ENCODE measurements at regions of chr3 and their contacts with region 1.

Region 1: DNA sequence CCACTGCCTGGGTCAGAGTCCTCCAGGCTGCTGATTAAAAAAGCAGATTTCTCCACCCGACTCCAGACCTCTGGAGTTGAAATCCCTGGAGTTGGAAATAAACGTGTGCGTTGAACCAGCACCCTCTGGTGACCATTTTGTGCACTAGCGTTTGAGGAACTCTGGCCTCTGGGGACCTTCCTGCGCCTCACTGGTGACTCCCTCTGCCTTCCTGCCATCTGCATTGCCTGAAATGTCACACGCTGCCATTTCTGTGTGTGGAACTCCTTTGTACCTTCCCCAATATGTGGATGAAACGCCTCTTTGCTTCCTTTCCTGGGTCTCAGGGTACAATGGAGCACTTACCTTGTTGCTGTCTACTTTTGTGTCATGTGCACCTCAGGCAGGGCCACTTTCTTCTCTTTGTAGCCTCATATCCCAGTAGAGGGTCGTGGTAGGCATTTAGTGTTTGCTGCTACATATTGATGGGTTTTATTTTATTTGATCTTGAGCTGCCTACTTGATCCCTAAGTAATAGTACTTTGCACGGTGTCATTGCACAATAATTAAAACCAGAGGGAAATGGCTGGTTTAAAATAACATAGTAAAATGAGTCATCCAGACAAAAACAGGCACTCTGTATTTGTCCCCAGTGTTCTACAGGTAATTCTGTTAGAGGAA is 56.8 kb downstream of the GPR171 start:
- DNase-seq: peak; percentile 37
- H3K4me3 Mint-ChIP-seq: no peak overlapping the region
- H3K27ac Mint-ChIP-seq: no peak overlapping the region
- H3K4me1 Mint-ChIP-seq: peaks cover 8% of the 10 kb centered on the region
- H3K27me3 Mint-ChIP-seq: peaks cover 3% of the 10 kb centered on the region

Region 2: DNA sequence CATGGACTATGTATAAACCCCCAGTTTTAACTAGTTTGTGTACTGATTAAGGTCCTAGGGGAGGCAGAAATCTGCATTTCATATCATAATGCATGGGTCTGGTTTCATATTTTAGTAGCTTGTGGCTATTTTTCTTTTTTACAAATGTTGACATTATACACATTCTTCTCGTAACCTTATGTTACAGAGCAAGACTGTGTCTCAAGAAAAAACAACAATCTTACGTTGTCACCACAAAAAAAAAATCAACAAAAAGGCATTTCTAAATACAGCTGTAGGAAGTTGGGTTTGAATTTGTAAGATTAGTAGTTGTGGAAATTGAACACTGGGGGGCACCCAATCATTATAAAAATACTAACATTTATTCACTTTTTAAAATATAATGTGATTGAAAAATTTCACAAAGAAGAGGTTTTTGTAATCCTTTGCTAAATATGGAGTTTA is 617.8 kb before region 1 on chr3:
- intact Hi-C with region 1: loop called (anchors 2 kb)
- DNase-seq: no peak
- H3K4me3 Mint-ChIP-seq: no peak overlapping the region
- H3K27ac Mint-ChIP-seq: no peak overlapping the region
- H3K4me1 Mint-ChIP-seq: peaks cover 6% of the 10 kb centered on the region
- H3K27me3 Mint-ChIP-seq: peaks cover 19% of the 10 kb centered on the region

Region 3: GRCh38 chr3:150787741-150788370 is 358.3 kb before region 1 on chr3:
- intact Hi-C with region 1: loop called (anchors 1 kb)
- DNase-seq: peak; percentile 59
- H3K4me3 Mint-ChIP-seq: no peak overlapping the region
- H3K27ac Mint-ChIP-seq: no peak overlapping the region
- H3K4me1 Mint-ChIP-seq: peaks cover 41% of the 10 kb centered on the region
- H3K27me3 Mint-ChIP-seq: peaks cover 2% of the 10 kb centered on the region

Region 4: GRCh38 chr3:150925751-150926201 is 220.4 kb before region 1 on chr3:
- intact Hi-C with region 1: loop called (anchors 1 kb)
- DNase-seq: peak; percentile 41
- H3K4me3 Mint-ChIP-seq: peak overlapping the region; percentile 45
- H3K27ac Mint-ChIP-seq: no peak overlapping the region
- H3K4me1 Mint-ChIP-seq: no peaks in the 10 kb centered on the region
- H3K27me3 Mint-ChIP-seq: peaks cover 9% of the 10 kb centered on the region

Region 5: DNA sequence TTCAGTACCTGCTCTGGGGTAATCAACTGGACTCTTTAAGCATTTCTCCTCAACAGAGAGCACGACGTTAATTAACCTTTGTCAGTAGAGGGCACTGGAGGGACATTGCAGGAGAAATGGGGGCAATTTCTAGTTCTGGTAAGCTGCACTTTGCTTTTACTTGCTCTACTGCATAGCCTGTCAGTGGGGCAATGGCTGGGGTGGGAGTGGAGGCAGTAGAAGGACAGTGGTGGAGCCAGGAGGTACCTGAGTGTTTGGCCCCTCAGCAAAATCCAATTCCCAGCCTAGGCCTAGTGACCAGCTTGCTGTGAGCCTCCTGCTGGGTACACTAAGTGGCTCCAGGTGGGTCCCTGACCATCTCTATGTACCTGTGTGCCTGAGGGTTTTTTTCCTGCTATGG is 79.0 kb before region 1 on chr3:
- intact Hi-C with region 1: loop called (anchors 1 kb)
- DNase-seq: no peak
- H3K4me3 Mint-ChIP-seq: no peak overlapping the region
- H3K27ac Mint-ChIP-seq: no peak overlapping the region
- H3K4me1 Mint-ChIP-seq: no peaks in the 10 kb centered on the region
- H3K27me3 Mint-ChIP-seq: peaks cover 15% of the 10 kb centered on the region